CD4-positive, alpha-beta T cell (primary cell): ENCODE measurements at regions of chr19 and their contacts with region 1.

Region 1: GRCh38 chr19:4390567-4391305 is 9.6 kb downstream of the SH3GL1 start:
- DNase-seq: no peak
- ATAC-seq: no peak
- H3K4me3 ChIP-seq: no peak overlapping the region
- H3K4me3 Mint-ChIP-seq: no peak overlapping the region
- H3K27ac ChIP-seq: peak overlapping the region in 1 of 2 donors; percentile 15
- H3K27ac Mint-ChIP-seq: peak overlapping the region; percentile 68
- H3K4me1 ChIP-seq: peaks cover 55% of the 10 kb centered on the region
- H3K4me1 Mint-ChIP-seq: peaks cover 39% of the 10 kb centered on the region
- H3K27me3 ChIP-seq: no peaks in the 10 kb centered on the region
- H3K27me3 Mint-ChIP-seq: no peaks in the 10 kb centered on the region
- CTCF ChIP-seq: no peak

Region 2: GRCh38 chr19:3284759-3285646 is 1105.7 kb before region 1 on chr19:
- CTCF ChIA-PET with region 1: no interaction called
- POLR2A ChIA-PET with region 1: no interaction called
- intact Hi-C with region 1: loop called in 1 of 2 experiments (anchors 5 kb)
- DNase-seq: peak in 13 of 14 experiments; percentile 25 to 89 (median 56)
- ATAC-seq: peak; percentile 73
- H3K4me3 ChIP-seq: peak overlapping the region; percentile 24
- H3K4me3 Mint-ChIP-seq: no peak overlapping the region
- H3K27ac ChIP-seq: no peak overlapping the region
- H3K27ac Mint-ChIP-seq: no peak overlapping the region
- H3K4me1 ChIP-seq: peaks cover 22% of the 10 kb centered on the region
- H3K4me1 Mint-ChIP-seq: peaks cover 5% of the 10 kb centered on the region
- H3K27me3 ChIP-seq: peaks cover 2 to 13% of the 10 kb centered on the region in 2 experiments
- H3K27me3 Mint-ChIP-seq: peaks cover 44% of the 10 kb centered on the region
- CTCF ChIP-seq: no peak

Region 3: GRCh38 chr19:4375164-4376027 is 15.3 kb before region 1 on chr19:
- CTCF ChIA-PET with region 1: interaction called, 9 read pairs
- POLR2A ChIA-PET with region 1: interaction called, 4 read pairs
- intact Hi-C with region 1: loop called in 1 of 2 experiments (anchors 2 kb)
- DNase-seq: no peak
- ATAC-seq: no peak
- H3K4me3 ChIP-seq: no peak overlapping the region
- H3K4me3 Mint-ChIP-seq: no peak overlapping the region
- H3K27ac ChIP-seq: no peak overlapping the region
- H3K27ac Mint-ChIP-seq: peak overlapping the region; percentile 71
- H3K4me1 ChIP-seq: peaks cover 100% of the 10 kb centered on the region
- H3K4me1 Mint-ChIP-seq: peaks cover 44% of the 10 kb centered on the region
- H3K27me3 ChIP-seq: no peaks in the 10 kb centered on the region
- H3K27me3 Mint-ChIP-seq: no peaks in the 10 kb centered on the region
- CTCF ChIP-seq: no peak